PC-3 (cell line): ENCODE measurements at regions of chr1 and their contacts with region 1.

Region 1: GRCh38 chr1:172851077-172851476 is 192.2 kb downstream of the FASLG start:
- DNase-seq: no peak
- ATAC-seq: no peak
- H3K4me3 ChIP-seq: no peak overlapping the region
- H3K27ac ChIP-seq: no peak overlapping the region
- H3K4me1 ChIP-seq: no peaks in the 10 kb centered on the region
- H3K27me3 ChIP-seq: no peaks in the 10 kb centered on the region
- CTCF ChIP-seq: no peak

Region 2: DNA sequence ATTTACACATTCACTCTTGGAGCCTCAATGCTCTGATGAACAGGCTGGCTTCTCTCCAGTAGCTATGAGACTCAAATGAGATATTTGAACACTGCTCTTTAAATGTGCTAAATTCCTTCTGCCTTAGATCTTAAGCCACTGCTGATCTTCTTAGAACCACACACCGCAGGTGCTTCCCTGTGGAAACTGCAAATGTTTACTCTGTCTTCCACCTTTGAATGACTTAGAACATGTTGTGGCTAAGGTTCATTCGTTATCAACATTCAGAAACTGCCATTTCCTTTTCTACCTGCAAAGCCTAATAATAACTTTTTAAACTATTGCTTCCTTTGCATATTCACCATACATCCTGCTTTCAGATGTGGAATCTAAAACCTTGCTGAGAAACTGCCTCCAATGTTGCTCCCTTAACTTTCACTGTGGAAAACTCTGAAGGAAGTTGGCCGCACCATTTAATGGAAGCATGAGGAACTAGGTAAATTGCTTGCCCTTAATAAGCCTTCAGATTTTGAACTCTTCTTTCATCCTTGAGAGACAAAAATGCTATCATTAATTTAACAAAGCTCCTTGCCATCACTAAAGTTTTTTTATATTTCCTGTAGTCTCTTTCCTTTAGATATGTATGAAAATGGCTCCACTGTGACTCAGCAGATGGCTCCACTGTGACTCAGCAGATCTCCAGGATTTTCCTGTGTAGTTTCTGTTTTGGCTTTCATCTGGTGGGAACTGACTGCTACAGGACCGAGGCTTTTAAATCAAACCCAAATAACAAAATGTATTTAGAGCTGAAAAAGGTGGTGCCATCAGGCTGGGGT is 55.9 kb after region 1 on chr1:
- CTCF ChIA-PET with region 1: no interaction called
- POLR2A ChIA-PET with region 1: no interaction called
- intact Hi-C with region 1: no loop called
- DNase-seq: peak; percentile 99
- ATAC-seq: peak; percentile 25
- H3K4me3 ChIP-seq: no peak overlapping the region; the same call in 1 of the 2 replicates
- H3K27ac ChIP-seq: peak overlapping the region; percentile 77
- H3K4me1 ChIP-seq: peaks cover 64% of the 10 kb centered on the region
- H3K27me3 ChIP-seq: no peaks in the 10 kb centered on the region
- CTCF ChIP-seq: no peak

Region 3: DNA sequence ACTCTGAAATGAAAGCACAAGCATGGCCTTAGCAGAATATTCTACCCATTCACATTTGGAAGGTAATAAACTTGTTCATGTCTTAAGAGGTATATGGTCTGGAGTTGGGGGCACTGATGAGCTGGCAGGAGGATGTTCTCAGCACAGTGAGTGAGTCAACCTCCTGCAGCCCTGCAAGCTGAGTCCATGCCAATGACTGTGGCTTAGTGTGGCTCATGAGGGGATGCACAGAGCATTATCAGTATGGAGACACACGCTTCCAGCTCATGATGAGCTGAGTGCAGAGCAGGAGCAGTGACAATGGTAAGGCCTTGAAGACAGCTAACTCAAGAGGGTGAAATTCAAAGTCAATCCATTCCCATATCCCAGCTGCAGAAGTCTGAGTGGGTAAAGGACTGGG is 97.4 kb after region 1 on chr1:
- CTCF ChIA-PET with region 1: no interaction called
- POLR2A ChIA-PET with region 1: no interaction called
- intact Hi-C with region 1: no loop called
- DNase-seq: peak; percentile 99
- ATAC-seq: peak; percentile 100
- H3K4me3 ChIP-seq: no peak overlapping the region
- H3K27ac ChIP-seq: peak overlapping the region; percentile 13
- H3K4me1 ChIP-seq: peaks cover 22% of the 10 kb centered on the region
- H3K27me3 ChIP-seq: no peaks in the 10 kb centered on the region
- CTCF ChIP-seq: peak; percentile 43

Region 4: GRCh38 chr1:173043253-173043652 is 192.2 kb after region 1 on chr1:
- CTCF ChIA-PET with region 1: no interaction called
- POLR2A ChIA-PET with region 1: no interaction called
- intact Hi-C with region 1: loop called (anchors 5 kb)
- DNase-seq: peak; percentile 99
- ATAC-seq: peak; percentile 99
- H3K4me3 ChIP-seq: peak overlapping the region; percentile 1; the same call in 1 of the 2 replicates
- H3K27ac ChIP-seq: peak overlapping the region; percentile 33
- H3K4me1 ChIP-seq: peaks cover 27% of the 10 kb centered on the region
- H3K27me3 ChIP-seq: no peaks in the 10 kb centered on the region
- CTCF ChIP-seq: no peak